CD4-positive, alpha-beta memory T cell (primary cell): ENCODE measurements at regions of chr12 and their contacts with region 1.

Region 1: DNA sequence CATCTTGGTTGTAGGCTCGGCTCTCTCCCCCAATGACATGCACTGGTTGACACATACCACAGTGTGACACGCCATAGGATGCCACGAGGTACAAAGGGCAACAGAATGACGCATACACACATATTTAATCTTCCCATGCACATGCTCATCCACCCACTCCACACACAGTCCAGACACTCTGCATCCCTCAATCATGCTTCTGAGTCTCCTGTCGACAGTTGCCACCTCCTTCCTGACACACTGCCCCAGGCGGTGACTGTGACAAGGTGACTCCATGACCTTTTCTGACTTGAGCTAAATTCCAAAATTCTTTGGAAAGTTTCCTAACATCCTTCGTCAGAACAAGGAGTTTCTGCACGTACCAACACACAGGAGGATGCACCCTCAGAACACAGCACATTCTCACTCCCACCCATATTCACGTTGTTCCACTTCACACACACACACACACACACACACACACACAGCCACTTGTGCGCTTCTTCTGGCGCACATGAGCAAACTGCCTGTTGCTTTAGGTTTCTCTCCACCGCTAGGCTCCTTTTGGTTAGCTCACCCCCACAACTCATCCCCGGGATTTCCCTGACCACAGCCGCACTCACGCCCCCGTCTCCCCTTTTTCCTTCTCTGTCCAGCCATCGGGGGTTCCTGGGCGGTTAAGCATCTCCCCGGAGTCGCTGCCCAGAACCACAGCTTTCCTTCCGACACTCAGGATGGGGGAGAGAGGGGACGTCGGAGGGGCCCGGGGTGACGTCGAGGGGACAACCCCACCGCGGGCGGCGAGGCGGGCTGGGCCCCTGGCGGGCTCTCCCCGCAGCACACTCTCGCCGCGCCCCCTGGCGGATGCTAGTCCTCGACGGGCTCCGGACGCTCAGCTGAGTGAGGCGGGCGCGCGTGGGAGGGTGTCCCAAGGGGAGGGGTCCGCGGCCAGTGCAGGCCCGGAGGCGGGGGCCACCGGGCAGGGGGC is 524 bp upstream of the WNT1 start:
- DNase-seq: peak; percentile 75 to 93 (median 80)
- H3K4me3 ChIP-seq: no peak overlapping the region
- H3K4me3 Mint-ChIP-seq: peak overlapping the region; percentile 48 to 80 (median 60)
- H3K27ac ChIP-seq: no peak overlapping the region
- H3K27ac Mint-ChIP-seq: peak overlapping the region; percentile 57 to 97 (median 83)
- H3K4me1 ChIP-seq: peaks cover 50% of the 10 kb centered on the region
- H3K4me1 Mint-ChIP-seq: peaks cover 35 to 65% (median 46%) of the 10 kb centered on the region in 4 donors
- H3K27me3 ChIP-seq: peaks cover 17% of the 10 kb centered on the region
- H3K27me3 Mint-ChIP-seq: peaks cover 11 to 26% of the 10 kb centered on the region in 2 donors

Region 2: GRCh38 chr12:48690990-48691389 is 286.6 kb before region 1 on chr12:
- CTCF ChIA-PET with region 1: no interaction called
- POLR2A ChIA-PET with region 1: no interaction called
- intact Hi-C with region 1: no loop called
- DNase-seq: no peak
- H3K4me3 ChIP-seq: no peak overlapping the region
- H3K4me3 Mint-ChIP-seq: no peak overlapping the region
- H3K27ac ChIP-seq: no peak overlapping the region
- H3K27ac Mint-ChIP-seq: peak overlapping the region in 3 of 7 donors; percentile 17 to 56 (median 53)
- H3K4me1 ChIP-seq: no peaks in the 10 kb centered on the region
- H3K4me1 Mint-ChIP-seq: peaks cover 3 to 5% (median 4%) of the 10 kb centered on the region in 4 donors
- H3K27me3 ChIP-seq: no peaks in the 10 kb centered on the region
- H3K27me3 Mint-ChIP-seq: no peaks in the 10 kb centered on the region

Region 3: GRCh38 chr12:48890657-48891418 is 86.8 kb before region 1 on chr12:
- CTCF ChIA-PET with region 1: interaction called, 11 read pairs
- POLR2A ChIA-PET with region 1: no interaction called
- intact Hi-C with region 1: no loop called
- DNase-seq: peak; percentile 62 to 72 (median 64)
- H3K4me3 ChIP-seq: no peak overlapping the region
- H3K4me3 Mint-ChIP-seq: peak overlapping the region in 2 of 8 donors; percentile 38 to 56
- H3K27ac ChIP-seq: no peak overlapping the region
- H3K27ac Mint-ChIP-seq: peak overlapping the region in 1 of 7 donors; percentile 6
- H3K4me1 ChIP-seq: peaks cover 9% of the 10 kb centered on the region
- H3K4me1 Mint-ChIP-seq: peaks cover 0 to 2% (median 0%) of the 10 kb centered on the region in 4 donors
- H3K27me3 ChIP-seq: peaks cover 11% of the 10 kb centered on the region
- H3K27me3 Mint-ChIP-seq: peaks cover 5 to 11% of the 10 kb centered on the region in 2 donors

Region 4: DNA sequence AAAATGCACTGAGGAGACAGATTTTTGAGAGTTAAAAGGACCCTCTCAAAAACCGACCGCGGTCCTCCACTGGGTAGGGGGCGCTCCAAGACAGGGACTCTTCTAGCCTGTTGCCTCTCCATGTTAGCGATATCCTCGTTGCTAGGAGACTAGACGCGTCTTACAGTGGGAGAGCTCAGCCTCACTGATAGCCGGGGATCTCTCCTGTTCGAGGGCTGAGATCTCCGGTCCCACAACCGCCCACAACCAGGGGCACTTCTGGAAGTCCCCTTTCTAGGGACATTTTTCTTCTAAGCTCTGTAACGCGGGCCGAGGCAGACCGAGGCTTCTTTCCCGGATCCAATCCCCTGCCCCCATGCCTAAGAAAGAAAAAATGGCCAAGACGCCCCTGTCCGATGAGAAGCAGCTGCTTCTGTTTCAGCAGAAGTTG is 73.6 kb before region 1 on chr12:
- CTCF ChIA-PET with region 1: interaction called, 12 read pairs
- POLR2A ChIA-PET with region 1: interaction called, 4 read pairs
- intact Hi-C with region 1: loop called (anchors 5 kb)
- DNase-seq: peak; percentile 81 to 89 (median 82)
- H3K4me3 ChIP-seq: peak overlapping the region in 1 of 2 donors; percentile 36
- H3K4me3 Mint-ChIP-seq: peak overlapping the region; percentile 68 to 86 (median 82)
- H3K27ac ChIP-seq: no peak overlapping the region
- H3K27ac Mint-ChIP-seq: peak overlapping the region in 6 of 7 donors; percentile 76 to 92 (median 89)
- H3K4me1 ChIP-seq: peaks cover 6% of the 10 kb centered on the region
- H3K4me1 Mint-ChIP-seq: peaks cover 2 to 13% (median 7%) of the 10 kb centered on the region in 4 donors
- H3K27me3 ChIP-seq: no peaks in the 10 kb centered on the region
- H3K27me3 Mint-ChIP-seq: peaks cover 0 to 4% of the 10 kb centered on the region in 2 donors

Region 5: DNA sequence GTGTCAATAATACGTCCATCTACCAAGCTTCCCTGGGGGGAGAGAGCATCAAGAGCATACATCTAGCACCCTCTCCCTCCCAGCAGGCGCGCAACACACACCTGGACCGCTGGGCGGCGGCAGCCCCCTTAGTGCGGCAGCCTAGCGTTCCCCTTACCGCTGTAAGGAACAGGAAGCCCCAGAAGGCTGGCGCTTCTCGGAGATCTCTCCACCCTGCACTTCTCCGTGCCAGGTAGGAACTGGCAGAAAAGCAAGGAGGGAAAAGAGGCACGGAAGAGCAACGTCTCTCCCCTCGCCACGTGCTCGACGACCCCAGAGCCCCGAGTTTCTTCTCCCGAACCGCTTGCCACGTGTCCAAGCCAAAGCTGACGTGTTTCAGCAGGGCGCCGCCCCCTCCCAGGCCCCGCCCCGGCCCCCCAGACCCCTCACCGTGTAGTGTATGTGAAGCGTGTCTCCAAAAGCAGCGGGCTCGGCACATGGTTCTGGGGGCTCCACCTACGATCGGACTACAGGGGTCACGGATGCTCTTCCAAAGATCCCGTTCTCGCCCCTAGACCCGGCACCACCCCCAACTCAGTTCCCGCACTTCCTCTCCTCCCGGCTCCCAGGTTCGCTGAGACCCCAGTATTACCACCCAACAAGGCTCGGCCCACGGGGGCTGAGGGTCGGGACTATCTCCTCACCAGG is 52.8 kb before region 1 on chr12:
- CTCF ChIA-PET with region 1: interaction called, 62 read pairs
- POLR2A ChIA-PET with region 1: interaction called, 39 read pairs
- intact Hi-C with region 1: loop called (anchors 2 kb)
- DNase-seq: peak; percentile 79 to 85 (median 81)
- H3K4me3 ChIP-seq: peak overlapping the region; percentile 20 to 97
- H3K4me3 Mint-ChIP-seq: peak overlapping the region; percentile 95 to 98 (median 97)
- H3K27ac ChIP-seq: peak overlapping the region; percentile 95
- H3K27ac Mint-ChIP-seq: peak overlapping the region; percentile 96 to 100 (median 99)
- H3K4me1 ChIP-seq: peaks cover 34% of the 10 kb centered on the region
- H3K4me1 Mint-ChIP-seq: peaks cover 36 to 66% (median 52%) of the 10 kb centered on the region in 4 donors
- H3K27me3 ChIP-seq: no peaks in the 10 kb centered on the region
- H3K27me3 Mint-ChIP-seq: no peaks in the 10 kb centered on the region

Region 6: GRCh38 chr12:48936379-48936979 is 41.1 kb before region 1 on chr12:
- CTCF ChIA-PET with region 1: interaction called, 57 read pairs
- POLR2A ChIA-PET with region 1: interaction called, 18 read pairs
- intact Hi-C with region 1: loop called (anchors 2 kb)
- DNase-seq: peak; percentile 74 to 82 (median 78)
- H3K4me3 ChIP-seq: no peak overlapping the region
- H3K4me3 Mint-ChIP-seq: no peak overlapping the region
- H3K27ac ChIP-seq: peak overlapping the region; percentile 71
- H3K27ac Mint-ChIP-seq: peak overlapping the region; percentile 86 to 97 (median 95)
- H3K4me1 ChIP-seq: peaks cover 45% of the 10 kb centered on the region
- H3K4me1 Mint-ChIP-seq: peaks cover 31 to 50% (median 38%) of the 10 kb centered on the region in 4 donors
- H3K27me3 ChIP-seq: no peaks in the 10 kb centered on the region
- H3K27me3 Mint-ChIP-seq: no peaks in the 10 kb centered on the region

Region 7: DNA sequence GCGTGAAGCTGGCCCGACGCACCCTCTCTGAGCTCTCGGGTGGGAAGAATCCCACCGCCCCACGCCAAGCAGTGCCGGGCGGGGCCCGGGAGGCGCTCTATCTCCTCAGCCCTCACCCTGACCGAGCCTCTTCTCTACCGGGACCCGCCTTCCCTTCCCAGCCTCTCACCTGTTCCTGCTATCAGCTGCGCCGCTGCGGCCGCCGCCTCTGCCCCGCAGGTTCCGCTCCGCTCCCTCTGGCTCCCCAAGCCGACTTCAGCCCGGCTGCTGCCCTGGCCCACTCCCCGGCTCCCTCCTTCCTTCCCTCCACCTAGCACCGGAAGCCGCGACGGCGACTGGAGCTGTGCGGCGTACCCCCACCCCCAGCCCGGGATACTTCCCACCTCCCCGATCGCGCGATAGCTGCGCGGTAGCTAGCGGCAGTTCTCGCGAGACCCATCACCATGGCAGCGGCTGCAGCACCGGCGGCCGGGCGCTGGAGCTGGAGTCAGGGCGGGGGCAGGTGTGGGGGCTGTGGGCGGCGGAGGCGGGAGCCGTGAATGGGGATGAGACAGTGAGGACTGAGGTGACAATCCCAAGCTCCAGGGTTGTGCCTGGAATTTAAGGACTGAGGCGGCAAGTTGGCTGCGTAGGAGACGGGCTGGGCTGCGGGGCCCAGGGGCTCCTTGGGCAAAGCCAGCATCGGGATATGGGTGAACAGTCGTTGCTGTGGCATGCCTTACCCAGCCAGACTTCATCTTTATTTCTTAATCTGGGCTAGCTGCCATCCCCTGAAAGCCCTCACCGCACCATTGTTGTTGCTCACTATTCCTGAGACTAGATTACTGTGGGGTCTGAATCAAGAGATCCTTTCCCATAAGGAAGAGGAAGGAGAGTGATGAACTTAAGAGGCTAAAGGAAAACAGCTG is 20.2 kb before region 1 on chr12 and contains the start of gene ARF3:
- CTCF ChIA-PET with region 1: interaction called, 72 read pairs
- POLR2A ChIA-PET with region 1: interaction called, 55 read pairs
- intact Hi-C with region 1: loop called (anchors 1 kb)
- DNase-seq: peak; percentile 91 to 93 (median 93)
- H3K4me3 ChIP-seq: peak within 1 kb of the TSS; percentile 45 to 71
- H3K4me3 Mint-ChIP-seq: peak within 1 kb of the TSS; percentile 92 to 98 (median 96)
- H3K27ac ChIP-seq: peak within 1 kb of the TSS; percentile 73
- H3K27ac Mint-ChIP-seq: peak within 1 kb of the TSS; percentile 91 to 97 (median 95)
- H3K4me1 ChIP-seq: peaks cover 34% of the 10 kb centered on the region
- H3K4me1 Mint-ChIP-seq: peaks cover 27 to 54% (median 38%) of the 10 kb centered on the region in 4 donors
- H3K27me3 ChIP-seq: no peaks in the 10 kb centered on the region
- H3K27me3 Mint-ChIP-seq: peaks cover 1 to 2% of the 10 kb centered on the region in 2 donors
- total RNA-seq, gene ARF3: 69.8 to 77.5 TPM

Region 8: GRCh38 chr12:48995061-48995879 is 17.7 kb after region 1 on chr12:
- CTCF ChIA-PET with region 1: interaction called, 244 read pairs
- POLR2A ChIA-PET with region 1: interaction called, 46 read pairs
- intact Hi-C with region 1: loop called (anchors 2 kb)
- DNase-seq: peak; percentile 31 to 53 (median 40)
- H3K4me3 ChIP-seq: no peak overlapping the region
- H3K4me3 Mint-ChIP-seq: peak overlapping the region in 6 of 8 donors; percentile 47 to 92 (median 69)
- H3K27ac ChIP-seq: no peak overlapping the region
- H3K27ac Mint-ChIP-seq: peak overlapping the region in 5 of 7 donors; percentile 51 to 93 (median 89)
- H3K4me1 ChIP-seq: peaks cover 40% of the 10 kb centered on the region
- H3K4me1 Mint-ChIP-seq: peaks cover 13 to 44% (median 25%) of the 10 kb centered on the region in 4 donors
- H3K27me3 ChIP-seq: peaks cover 18% of the 10 kb centered on the region
- H3K27me3 Mint-ChIP-seq: peaks cover 34 to 43% of the 10 kb centered on the region in 2 donors

Region 9: DNA sequence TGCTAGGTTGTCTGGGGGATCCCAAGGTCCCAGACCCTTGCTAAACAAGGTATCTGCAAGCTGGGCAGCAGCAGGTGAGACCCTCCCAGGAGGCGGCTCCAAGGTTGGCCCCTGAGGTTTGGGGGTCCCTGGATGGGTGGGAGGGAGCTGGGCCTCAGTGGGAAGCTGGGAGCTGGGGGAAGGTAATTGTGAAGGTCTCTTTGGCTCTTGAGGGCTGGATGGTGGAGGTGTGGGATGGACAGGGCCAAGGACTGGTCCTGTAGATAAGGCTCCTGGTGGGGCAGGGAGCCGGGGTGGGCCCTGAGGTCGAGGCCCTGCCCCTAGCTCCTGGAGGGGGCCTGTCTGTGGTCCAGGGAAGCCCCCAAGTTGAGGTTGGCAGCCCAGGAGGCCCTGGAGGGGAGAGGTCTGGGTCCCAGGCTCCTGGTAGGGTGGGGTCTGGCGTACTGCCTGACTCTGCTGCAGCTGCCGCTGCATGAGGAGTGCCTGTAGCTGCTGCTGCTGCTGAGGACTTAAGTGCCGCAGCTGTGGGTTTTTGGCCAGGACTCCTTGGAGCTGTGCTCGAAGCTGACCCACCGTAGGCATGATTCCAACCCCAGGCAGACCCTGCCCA is 54.1 kb after region 1 on chr12:
- CTCF ChIA-PET with region 1: no interaction called
- POLR2A ChIA-PET with region 1: no interaction called
- intact Hi-C with region 1: no loop called
- DNase-seq: no peak
- H3K4me3 ChIP-seq: no peak overlapping the region
- H3K4me3 Mint-ChIP-seq: no peak overlapping the region
- H3K27ac ChIP-seq: no peak overlapping the region
- H3K27ac Mint-ChIP-seq: peak overlapping the region in 1 of 7 donors; percentile 46
- H3K4me1 ChIP-seq: no peaks in the 10 kb centered on the region
- H3K4me1 Mint-ChIP-seq: peaks cover 0 to 6% (median 0%) of the 10 kb centered on the region in 4 donors
- H3K27me3 ChIP-seq: no peaks in the 10 kb centered on the region
- H3K27me3 Mint-ChIP-seq: no peaks in the 10 kb centered on the region